ENCODE measurements at regions of chr2 and their contacts with region 1.

Region 1: DNA sequence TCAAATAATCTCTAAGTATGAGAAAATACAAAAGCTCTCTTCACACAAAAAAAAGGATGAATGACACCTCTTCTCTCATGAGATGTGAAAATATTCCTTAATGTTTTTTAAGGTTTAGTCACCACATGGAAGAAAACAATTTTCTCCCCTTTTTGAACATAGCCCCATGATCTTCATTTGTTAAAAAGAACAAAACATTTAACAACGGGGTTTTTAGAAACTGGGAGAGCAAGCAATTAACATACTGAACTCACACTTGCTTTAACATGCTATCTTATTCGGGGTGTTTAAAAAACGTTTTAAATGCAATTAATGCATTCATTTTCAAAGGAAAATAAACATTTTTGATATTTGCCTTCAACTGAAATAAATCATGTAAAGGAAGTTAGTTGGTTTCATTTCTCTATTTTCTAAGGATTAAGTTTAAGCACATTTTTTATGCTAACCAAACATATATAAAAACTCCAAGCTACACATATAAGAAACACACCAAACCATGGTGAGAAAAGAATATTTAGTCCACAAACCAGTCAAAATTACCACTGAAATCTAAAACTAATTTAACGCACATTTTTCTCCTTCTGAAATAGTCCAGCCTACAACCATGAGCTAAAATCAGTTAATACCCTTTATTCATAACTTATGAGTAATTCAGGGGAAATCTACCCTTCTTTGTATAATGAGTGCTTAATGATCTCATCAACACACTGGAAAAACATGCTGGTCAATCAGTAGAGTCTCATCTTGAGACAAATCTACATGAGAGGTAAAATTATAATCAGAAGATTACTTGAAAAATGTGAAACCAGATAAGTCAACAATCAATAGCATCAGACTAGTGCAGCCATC is 8.2 kb downstream of the FBXO11 start:
- DNase-seq: no peak
- ATAC-seq: peak; percentile 69
- H3K4me3 ChIP-seq: peak overlapping the region; percentile 37
- H3K27ac ChIP-seq: peak overlapping the region; percentile 80
- H3K4me1 ChIP-seq: peaks cover 26% of the 10 kb centered on the region
- H3K27me3 ChIP-seq: no peaks in the 10 kb centered on the region
- CTCF ChIP-seq: no peak
- EP300 ChIP-seq: no peak
- POLR2A ChIP-seq: no peak
- RAD21 ChIP-seq: no peak

Region 2: DNA sequence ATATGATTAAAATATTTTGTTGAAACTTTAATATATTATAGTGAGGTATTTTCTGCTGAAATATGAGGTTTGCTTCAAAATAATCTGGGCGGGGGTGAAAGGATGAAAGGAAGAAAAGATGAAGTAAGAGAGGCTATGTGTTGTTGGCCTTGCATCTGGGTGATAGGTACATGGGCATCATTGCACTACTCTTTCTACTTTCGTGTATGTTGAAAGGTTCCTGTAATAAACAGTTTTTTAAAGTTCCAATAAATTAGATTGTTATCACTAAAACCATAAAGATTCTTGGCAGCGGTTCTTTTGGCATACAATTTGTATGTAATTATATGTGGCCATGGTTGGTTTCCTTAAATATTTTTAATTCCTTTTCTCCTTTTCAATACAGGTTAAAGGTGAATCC is 518.7 kb before region 1 on chr2:
- CTCF ChIA-PET with region 1: no interaction called
- POLR2A ChIA-PET with region 1: no interaction called
- RAD21 ChIA-PET with region 1: no interaction called
- SMC1A ChIA-PET with region 1: no interaction called
- in situ Hi-C with region 1: no loop called
- intact Hi-C with region 1: no loop called
- DNase-seq: no peak
- ATAC-seq: no peak
- H3K4me3 ChIP-seq: no peak overlapping the region
- H3K27ac ChIP-seq: no peak overlapping the region
- H3K4me1 ChIP-seq: no peaks in the 10 kb centered on the region
- H3K27me3 ChIP-seq: no peaks in the 10 kb centered on the region
- CTCF ChIP-seq: no peak
- EP300 ChIP-seq: no peak
- POLR2A ChIP-seq: no peak
- RAD21 ChIP-seq: no peak

Region 3: GRCh38 chr2:47782671-47783485 is 115.2 kb before region 1 on chr2 and contains the start of gene MSH6:
- CTCF ChIA-PET with region 1: interaction called, 3 read pairs
- POLR2A ChIA-PET with region 1: interaction called, 3 read pairs
- RAD21 ChIA-PET with region 1: no interaction called
- SMC1A ChIA-PET with region 1: no interaction called
- in situ Hi-C with region 1: no loop called
- intact Hi-C with region 1: loop called (anchors 5 kb)
- DNase-seq: peak; percentile 39
- ATAC-seq: peak; percentile 89
- H3K4me3 ChIP-seq: peak within 1 kb of the TSS; percentile 73
- H3K27ac ChIP-seq: peak within 1 kb of the TSS; percentile 80
- H3K4me1 ChIP-seq: 0 out of 2 replicates have a peak, but pooled peaks cover 8% of the 10 kb centered on the region
- H3K27me3 ChIP-seq: no peaks in the 10 kb centered on the region
- CTCF ChIP-seq: no peak
- EP300 ChIP-seq: no peak
- POLR2A ChIP-seq: peak; percentile 92
- RAD21 ChIP-seq: no peak
- polyA plus RNA-seq, gene MSH6: 12.4 to 25.6 TPM

Region 4: GRCh38 chr2:47867205-47867604 is 30.9 kb before region 1 on chr2:
- CTCF ChIA-PET with region 1: no interaction called
- POLR2A ChIA-PET with region 1: interaction called, 7 read pairs
- RAD21 ChIA-PET with region 1: interaction called, 8 read pairs
- SMC1A ChIA-PET with region 1: interaction called, 33 read pairs
- in situ Hi-C with region 1: no loop called
- intact Hi-C with region 1: loop called (anchors 2 kb)
- DNase-seq: no peak
- ATAC-seq: peak; percentile 23; the same call in 1 of the 3 replicates
- H3K4me3 ChIP-seq: no peak overlapping the region
- H3K27ac ChIP-seq: 0 out of 2 replicates have a peak overlapping the region, but pooled peaks have one; percentile 8
- H3K4me1 ChIP-seq: no peaks in the 10 kb centered on the region
- H3K27me3 ChIP-seq: no peaks in the 10 kb centered on the region
- CTCF ChIP-seq: no peak
- EP300 ChIP-seq: no peak
- POLR2A ChIP-seq: no peak
- RAD21 ChIP-seq: no peak